ENCODE measurements at regions of chr7 and their contacts with region 1.

Region 1: DNA sequence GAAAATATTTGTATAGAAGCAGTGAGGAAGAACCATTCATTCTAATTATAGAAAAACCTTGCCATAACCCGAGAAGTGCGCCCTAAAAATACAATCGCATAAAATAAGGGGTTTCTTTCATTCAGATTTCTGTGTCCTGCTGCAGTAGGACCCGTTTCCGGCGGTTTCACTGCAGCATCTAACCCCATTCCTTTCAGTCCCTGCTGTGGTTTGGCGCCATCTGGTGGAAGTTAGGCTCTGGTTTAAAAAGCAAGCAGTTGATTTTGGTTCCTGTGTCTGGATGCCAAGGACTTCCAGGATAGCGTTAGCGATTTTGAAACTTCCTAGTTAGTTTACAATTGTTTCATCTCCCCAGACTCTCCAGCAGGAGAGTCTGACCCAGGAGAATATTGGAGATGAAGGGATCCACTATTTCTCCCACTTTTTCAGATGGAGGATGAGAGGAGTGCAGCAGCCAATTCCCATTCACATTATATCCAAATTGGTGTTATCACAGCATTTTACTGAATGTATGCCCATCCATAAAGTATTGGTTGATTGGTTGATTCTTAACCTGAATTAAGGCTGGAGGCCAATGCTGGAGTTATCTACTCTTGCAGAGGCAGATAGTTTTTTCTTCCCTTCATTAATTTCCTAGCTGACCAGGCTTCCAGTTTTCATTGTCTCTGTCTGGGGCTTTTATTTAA is 128.8 kb upstream of the CACNA2D1 start:
- DNase-seq: peak; percentile 11
- ATAC-seq: peak; percentile 77
- H3K4me3 ChIP-seq: no peak overlapping the region
- H3K27ac ChIP-seq: no peak overlapping the region
- H3K4me1 ChIP-seq: no peaks in the 10 kb centered on the region
- H3K27me3 ChIP-seq: no peaks in the 10 kb centered on the region
- CTCF ChIP-seq: peak; percentile 79 to 89 (median 85)
- EP300 ChIP-seq: no peak
- POLR2A ChIP-seq: no peak
- RAD21 ChIP-seq: peak; percentile 92

Region 2: GRCh38 chr7:82044497-82045080 is 527.7 kb before region 1 on chr7:
- CTCF ChIA-PET with region 1: interaction called, 71 read pairs
- POLR2A ChIA-PET with region 1: no interaction called
- RAD21 ChIA-PET with region 1: interaction called, 37 read pairs
- SMC1A ChIA-PET with region 1: interaction called, 48 read pairs
- in situ Hi-C with region 1: loop called (anchors 5 kb)
- intact Hi-C with region 1: loop called (anchors 1 kb)
- DNase-seq: no peak
- ATAC-seq: peak; percentile 56
- H3K4me3 ChIP-seq: no peak overlapping the region
- H3K27ac ChIP-seq: no peak overlapping the region
- H3K4me1 ChIP-seq: no peaks in the 10 kb centered on the region
- H3K27me3 ChIP-seq: no peaks in the 10 kb centered on the region
- CTCF ChIP-seq: peak; percentile 42 to 75 (median 47); a peak in 5 of 6 replicates
- EP300 ChIP-seq: no peak
- POLR2A ChIP-seq: no peak
- RAD21 ChIP-seq: peak; percentile 85

Region 3: DNA sequence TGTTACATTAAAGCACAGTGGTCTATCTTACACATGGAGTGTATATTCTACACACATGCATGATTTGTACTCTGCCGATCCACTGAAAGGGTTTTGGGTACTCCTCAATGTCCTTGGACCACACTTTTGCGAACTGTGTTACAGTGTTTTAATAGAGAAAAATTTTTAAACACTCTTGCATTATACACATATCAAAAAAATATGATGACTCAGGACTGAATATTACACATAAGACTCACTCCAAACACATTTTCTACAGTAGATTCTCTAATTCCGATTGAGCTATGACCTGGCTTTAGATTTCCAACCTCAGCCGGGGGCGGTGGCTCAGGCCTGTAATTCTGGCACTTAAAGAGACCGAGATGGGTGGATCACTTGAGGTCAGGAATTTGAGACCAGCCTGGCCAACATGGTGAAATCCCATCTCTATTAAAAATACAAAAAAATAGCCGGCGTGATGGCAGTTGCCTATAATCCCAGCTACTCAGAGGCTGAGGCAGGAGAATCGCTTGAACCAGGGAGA is 351.1 kb before region 1 on chr7:
- CTCF ChIA-PET with region 1: no interaction called
- POLR2A ChIA-PET with region 1: no interaction called
- RAD21 ChIA-PET with region 1: interaction called, 5 read pairs
- SMC1A ChIA-PET with region 1: interaction called, 4 read pairs
- in situ Hi-C with region 1: loop called (anchors 10 kb)
- intact Hi-C with region 1: no loop called
- DNase-seq: no peak
- ATAC-seq: no peak
- H3K4me3 ChIP-seq: no peak overlapping the region
- H3K27ac ChIP-seq: no peak overlapping the region
- H3K4me1 ChIP-seq: no peaks in the 10 kb centered on the region
- H3K27me3 ChIP-seq: no peaks in the 10 kb centered on the region
- CTCF ChIP-seq: no peak
- EP300 ChIP-seq: no peak
- POLR2A ChIP-seq: no peak
- RAD21 ChIP-seq: no peak

Region 4: GRCh38 chr7:82443547-82444219 is 128.7 kb before region 1 on chr7 and contains the start of gene CACNA2D1:
- CTCF ChIA-PET with region 1: interaction called, 14 read pairs
- POLR2A ChIA-PET with region 1: interaction called, 3 read pairs
- RAD21 ChIA-PET with region 1: interaction called, 20 read pairs
- SMC1A ChIA-PET with region 1: interaction called, 12 read pairs
- in situ Hi-C with region 1: no loop called
- intact Hi-C with region 1: no loop called
- DNase-seq: no peak
- ATAC-seq: peak; percentile 62
- H3K4me3 ChIP-seq: no peak within 1 kb of the TSS
- H3K27ac ChIP-seq: no peak within 1 kb of the TSS
- H3K4me1 ChIP-seq: no peaks in the 10 kb centered on the region
- H3K27me3 ChIP-seq: peaks cover 5 to 11% of the 10 kb centered on the region in 2 experiments
- CTCF ChIP-seq: no peak; a peak in 1 of 6 replicates
- EP300 ChIP-seq: no peak
- POLR2A ChIP-seq: no peak
- RAD21 ChIP-seq: no peak
- polyA plus RNA-seq, gene CACNA2D1: 0.14 to 0.15 TPM

Region 5: GRCh38 chr7:82559193-82559805 is 13.0 kb before region 1 on chr7:
- CTCF ChIA-PET with region 1: interaction called, 31 read pairs
- POLR2A ChIA-PET with region 1: interaction called, 4 read pairs
- RAD21 ChIA-PET with region 1: interaction called, 14 read pairs
- SMC1A ChIA-PET with region 1: interaction called, 8 read pairs
- in situ Hi-C with region 1: no loop called
- intact Hi-C with region 1: no loop called
- DNase-seq: no peak
- ATAC-seq: peak; percentile 97
- H3K4me3 ChIP-seq: no peak overlapping the region
- H3K27ac ChIP-seq: no peak overlapping the region
- H3K4me1 ChIP-seq: no peaks in the 10 kb centered on the region
- H3K27me3 ChIP-seq: no peaks in the 10 kb centered on the region
- CTCF ChIP-seq: no peak
- EP300 ChIP-seq: peak in 1 of 2 experiments; percentile 69; a peak in 2 of 4 replicates
- POLR2A ChIP-seq: no peak
- RAD21 ChIP-seq: no peak

Region 6: GRCh38 chr7:82729172-82730030 is 157.1 kb after region 1 on chr7:
- CTCF ChIA-PET with region 1: interaction called, 3 read pairs
- POLR2A ChIA-PET with region 1: no interaction called
- RAD21 ChIA-PET with region 1: interaction called, 3 read pairs
- SMC1A ChIA-PET with region 1: interaction called, 3 read pairs
- in situ Hi-C with region 1: no loop called
- intact Hi-C with region 1: loop called (anchors 5 kb)
- DNase-seq: no peak
- ATAC-seq: peak; percentile 56; the same call in 2 of the 3 replicates
- H3K4me3 ChIP-seq: no peak overlapping the region
- H3K27ac ChIP-seq: no peak overlapping the region
- H3K4me1 ChIP-seq: no peaks in the 10 kb centered on the region
- H3K27me3 ChIP-seq: no peaks in the 10 kb centered on the region
- CTCF ChIP-seq: peak; percentile 55 to 72 (median 56)
- EP300 ChIP-seq: no peak
- POLR2A ChIP-seq: no peak
- RAD21 ChIP-seq: peak; percentile 80